ENCODE measurements at regions of chr16 and their contacts with region 1.

Region 1: DNA sequence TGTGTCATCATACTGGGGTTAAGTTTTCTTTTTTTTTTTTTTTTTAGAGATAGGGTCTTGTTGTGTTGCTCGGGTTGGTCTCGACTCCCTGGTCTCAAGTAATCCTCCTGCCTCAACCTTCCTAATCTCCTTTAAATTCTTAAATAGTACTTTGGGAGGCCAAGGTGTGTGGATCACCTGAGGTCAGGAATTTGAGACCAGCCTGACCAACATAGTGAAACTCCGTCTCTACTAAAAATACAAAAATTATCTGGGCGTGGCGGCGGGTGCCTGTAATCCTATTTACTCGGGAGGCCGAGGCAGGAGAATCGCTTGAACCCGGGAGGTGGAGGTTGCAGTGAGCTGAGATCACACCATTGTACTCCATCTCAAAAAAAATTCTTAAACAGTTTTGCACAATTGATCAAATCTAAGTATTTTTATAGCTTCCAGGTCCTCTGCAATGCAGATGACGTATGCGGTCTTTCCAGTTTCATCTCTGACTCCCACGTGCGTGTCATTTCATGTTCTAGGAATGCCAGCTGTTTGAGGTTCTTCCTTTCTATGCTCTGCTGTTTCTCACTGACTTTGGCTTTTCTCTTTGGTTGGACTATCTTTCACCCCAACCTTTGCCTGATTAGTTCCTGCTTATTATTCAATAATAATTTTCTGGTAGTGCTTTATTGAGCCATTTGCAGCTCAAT is 16.1 kb downstream of the CHP2 start:
- DNase-seq: peak; percentile 24
- H3K4me3 ChIP-seq: no peak overlapping the region
- H3K27ac ChIP-seq: no peak overlapping the region
- H3K4me1 ChIP-seq: no peaks in the 10 kb centered on the region
- H3K27me3 ChIP-seq: no peaks in the 10 kb centered on the region

Region 2: GRCh38 chr16:23712976-23713375 is 57.9 kb before region 1 on chr16 and contains the start of gene ERN2:
- in situ Hi-C with region 1: loop called (anchors 10 kb)
- DNase-seq: peak; percentile 11
- H3K4me3 ChIP-seq: no peak within 1 kb of the TSS
- H3K27ac ChIP-seq: no peak within 1 kb of the TSS
- H3K4me1 ChIP-seq: no peaks in the 10 kb centered on the region
- H3K27me3 ChIP-seq: peaks cover 30% of the 10 kb centered on the region
- total RNA-seq, gene ERN2: not detected in 2 replicates

Region 3: GRCh38 chr16:23889189-23889588 is 118.3 kb after region 1 on chr16:
- in situ Hi-C with region 1: no loop called
- DNase-seq: no peak
- H3K4me3 ChIP-seq: no peak overlapping the region
- H3K27ac ChIP-seq: no peak overlapping the region
- H3K4me1 ChIP-seq: no peaks in the 10 kb centered on the region
- H3K27me3 ChIP-seq: no peaks in the 10 kb centered on the region

Region 4: GRCh38 chr16:24478401-24478800 is 707.5 kb after region 1 on chr16:
- in situ Hi-C with region 1: no loop called
- DNase-seq: no peak
- H3K4me3 ChIP-seq: no peak overlapping the region
- H3K27ac ChIP-seq: no peak overlapping the region
- H3K4me1 ChIP-seq: no peaks in the 10 kb centered on the region
- H3K27me3 ChIP-seq: no peaks in the 10 kb centered on the region

Measured in GM23248 (cell line).